Thyroid gland (tissue), 4 donors: ENCODE measurements at regions of chr1 and their contacts with region 1.

Region 1: DNA sequence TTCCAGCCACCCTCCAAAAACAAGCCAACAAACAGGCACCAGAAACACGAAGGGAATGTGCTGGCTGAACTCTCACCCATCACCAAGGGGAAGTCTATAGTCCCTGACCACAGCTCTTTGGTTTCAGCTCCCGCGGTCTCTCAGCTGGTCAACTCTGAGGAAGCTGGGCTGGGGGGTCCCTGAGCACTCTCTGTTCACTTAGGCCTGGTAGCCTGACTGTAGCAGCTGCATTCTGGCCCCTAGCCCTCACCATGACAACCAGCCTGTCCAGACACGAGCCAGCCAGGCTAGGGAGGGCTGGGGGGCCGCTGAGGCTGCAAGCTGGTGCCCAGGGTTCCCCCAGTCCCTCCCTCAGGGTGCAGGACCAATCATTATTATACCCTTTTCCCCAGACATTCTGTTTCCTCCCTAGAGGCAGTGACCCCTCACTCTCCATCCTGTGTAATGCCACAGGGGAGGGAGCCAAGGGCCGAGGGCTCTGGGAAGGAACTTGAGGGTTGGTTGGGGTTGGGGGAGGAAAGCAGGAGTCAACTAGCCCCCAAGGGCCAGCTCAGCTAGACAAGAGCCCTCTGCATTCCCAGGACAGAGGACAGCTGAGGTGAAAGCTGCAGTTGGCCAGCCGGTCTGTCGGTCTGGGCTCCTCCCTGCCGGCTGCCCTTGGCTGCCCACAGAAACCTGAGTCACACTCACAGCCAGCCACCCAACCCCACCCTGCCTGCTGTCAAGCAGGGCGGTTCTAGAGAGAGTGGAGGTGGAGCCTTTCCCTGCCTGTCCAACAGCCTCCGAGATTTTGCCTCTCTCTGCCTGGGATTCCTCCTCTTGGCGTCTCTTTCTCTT is 1.2 kb upstream of the TRAPPC3 start:
- DNase-seq: peak; percentile 98
- H3K4me3 ChIP-seq: no peak overlapping the region
- H3K27ac ChIP-seq: peak overlapping the region; percentile 94 to 100 (median 100)
- H3K4me1 ChIP-seq: peaks cover 44 to 51% of the 10 kb centered on the region in 2 donors
- H3K27me3 ChIP-seq: no peaks in the 10 kb centered on the region
- CTCF ChIP-seq: no peak
- POLR2A ChIP-seq: peak in 1 of 2 donors; percentile 96

Region 2: DNA sequence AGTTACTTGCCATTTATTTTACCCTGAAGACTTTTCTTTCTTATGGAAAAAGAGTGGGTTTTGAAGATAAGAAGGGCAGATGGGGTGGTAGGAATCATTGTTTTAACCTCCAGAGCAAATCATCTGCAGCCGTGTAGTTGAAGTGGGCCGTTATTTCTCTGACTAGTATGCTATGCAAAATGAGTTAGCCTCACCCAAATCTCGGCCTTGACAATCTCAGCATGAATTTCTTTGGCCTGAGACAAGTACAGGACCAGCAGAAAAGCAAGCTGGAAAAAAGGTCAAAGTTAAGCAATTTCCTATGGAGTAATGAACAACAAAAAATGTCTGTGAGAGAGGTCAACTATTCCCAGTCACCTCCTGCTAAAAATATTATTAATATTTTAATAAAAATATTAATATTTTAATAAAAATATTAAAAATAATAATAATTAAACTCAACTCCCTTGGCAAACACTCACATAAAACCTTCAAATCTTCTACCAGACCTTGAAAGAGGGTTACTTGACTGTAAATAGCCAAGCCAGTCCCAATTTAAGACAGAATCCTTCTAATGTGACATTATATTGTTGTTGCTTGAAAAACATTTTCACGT is 73.4 kb before region 1 on chr1:
- intact Hi-C with region 1: no loop called
- DNase-seq: no peak
- H3K4me3 ChIP-seq: no peak overlapping the region
- H3K27ac ChIP-seq: no peak overlapping the region
- H3K4me1 ChIP-seq: no peaks in the 10 kb centered on the region
- H3K27me3 ChIP-seq: no peaks in the 10 kb centered on the region
- CTCF ChIP-seq: no peak
- POLR2A ChIP-seq: no peak

Region 3: DNA sequence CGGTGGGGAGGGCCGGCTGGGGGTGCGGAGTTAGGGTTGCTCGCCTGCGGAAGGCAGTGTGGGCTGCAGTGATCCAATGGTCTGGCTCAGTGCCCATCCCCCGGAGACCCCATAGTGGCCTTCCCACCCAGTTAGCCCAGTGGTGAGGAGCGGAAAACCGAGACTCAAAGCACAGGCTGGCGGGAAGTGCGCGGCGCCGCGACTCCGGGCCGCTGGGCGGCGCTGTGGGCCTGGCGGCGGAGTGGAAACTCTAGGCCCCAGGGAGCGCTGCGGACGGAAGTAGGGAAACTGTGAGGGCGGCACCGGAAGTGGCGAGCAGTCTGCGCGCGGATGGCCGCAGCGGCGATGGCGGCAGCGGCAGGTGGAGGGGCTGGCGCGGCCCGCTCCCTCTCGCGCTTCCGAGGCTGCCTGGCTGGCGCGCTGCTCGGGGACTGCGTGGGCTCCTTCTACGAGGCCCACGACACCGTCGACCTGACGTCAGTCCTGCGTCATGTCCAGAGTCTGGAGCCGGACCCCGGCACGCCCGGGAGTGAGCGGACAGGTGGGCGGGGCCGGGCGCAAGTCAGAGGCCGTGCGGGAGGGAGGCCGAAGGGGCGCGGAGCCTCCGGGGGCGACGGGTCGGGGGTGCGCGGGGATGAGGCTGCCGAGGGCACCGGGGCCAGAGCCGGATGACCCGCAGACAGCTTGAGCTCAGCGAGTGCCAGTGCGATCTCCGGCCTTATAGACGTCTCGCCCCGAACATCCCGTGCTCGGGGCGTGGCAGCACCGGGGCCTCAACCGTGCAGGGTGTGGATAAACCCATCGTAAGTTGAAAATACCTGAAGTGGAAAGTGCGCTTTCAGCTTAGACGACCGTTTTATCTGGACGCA is 61.7 kb before region 1 on chr1 and contains the start of gene ADPRS:
- intact Hi-C with region 1: no loop called
- DNase-seq: peak; percentile 85 to 86
- H3K4me3 ChIP-seq: peak within 1 kb of the TSS; percentile 51 to 90 (median 73)
- H3K27ac ChIP-seq: peak within 1 kb of the TSS; percentile 19 to 88 (median 84)
- H3K4me1 ChIP-seq: peaks cover 24 to 42% of the 10 kb centered on the region in 2 donors
- H3K27me3 ChIP-seq: no peaks in the 10 kb centered on the region
- CTCF ChIP-seq: peak; percentile 88 to 100 (median 99)
- POLR2A ChIP-seq: peak; percentile 79 to 91
- total RNA-seq, gene ADPRS: 31.8 to 50.1 (median 41.7) TPM

Region 4: DNA sequence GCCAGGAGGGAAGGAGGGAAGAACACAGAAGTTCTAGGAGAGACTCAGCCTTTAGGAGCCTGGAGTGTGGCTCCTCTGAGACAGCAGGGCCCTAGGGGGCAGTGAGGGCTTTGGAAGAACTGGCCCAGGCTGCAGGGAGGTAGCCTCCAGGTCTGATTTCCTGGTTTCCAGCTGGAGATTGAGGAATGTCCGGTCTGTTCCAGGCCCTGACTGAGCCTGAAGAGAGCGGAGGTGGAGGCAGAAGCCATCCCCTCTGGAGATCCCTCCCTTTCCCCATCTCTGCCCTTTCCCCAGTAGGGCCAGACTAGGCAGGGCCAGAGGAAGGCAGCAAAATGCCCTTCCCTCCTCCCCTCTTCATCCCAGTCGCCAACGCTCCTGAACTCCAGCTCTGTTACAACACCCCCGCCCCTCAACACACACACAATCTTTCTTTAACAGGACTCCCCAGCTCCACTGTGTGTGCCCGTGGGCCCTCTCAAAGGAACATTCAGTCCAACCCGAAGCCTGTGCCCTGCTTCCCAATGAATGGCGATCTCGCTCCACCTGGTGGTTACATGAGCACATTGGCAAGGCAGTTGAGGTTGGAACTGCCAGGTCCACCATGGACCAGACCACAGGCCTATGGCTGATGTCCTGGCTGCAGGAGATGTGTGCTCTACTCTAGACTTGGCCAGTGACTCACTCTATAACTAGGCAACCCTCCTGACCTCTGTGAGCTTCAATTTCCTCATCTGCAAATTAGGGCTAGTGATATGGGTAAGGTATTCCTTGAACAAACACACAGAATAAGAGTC is 37.5 kb after region 1 on chr1:
- intact Hi-C with region 1: loop called (anchors 5 kb)
- DNase-seq: peak; percentile 92 to 94
- H3K4me3 ChIP-seq: no peak overlapping the region
- H3K27ac ChIP-seq: peak overlapping the region; percentile 77 to 91 (median 83)
- H3K4me1 ChIP-seq: peaks cover 9 to 17% of the 10 kb centered on the region in 2 donors
- H3K27me3 ChIP-seq: no peaks in the 10 kb centered on the region
- CTCF ChIP-seq: peak in 5 of 6 experiments; percentile 58 to 99 (median 95)
- POLR2A ChIP-seq: no peak

Region 5: DNA sequence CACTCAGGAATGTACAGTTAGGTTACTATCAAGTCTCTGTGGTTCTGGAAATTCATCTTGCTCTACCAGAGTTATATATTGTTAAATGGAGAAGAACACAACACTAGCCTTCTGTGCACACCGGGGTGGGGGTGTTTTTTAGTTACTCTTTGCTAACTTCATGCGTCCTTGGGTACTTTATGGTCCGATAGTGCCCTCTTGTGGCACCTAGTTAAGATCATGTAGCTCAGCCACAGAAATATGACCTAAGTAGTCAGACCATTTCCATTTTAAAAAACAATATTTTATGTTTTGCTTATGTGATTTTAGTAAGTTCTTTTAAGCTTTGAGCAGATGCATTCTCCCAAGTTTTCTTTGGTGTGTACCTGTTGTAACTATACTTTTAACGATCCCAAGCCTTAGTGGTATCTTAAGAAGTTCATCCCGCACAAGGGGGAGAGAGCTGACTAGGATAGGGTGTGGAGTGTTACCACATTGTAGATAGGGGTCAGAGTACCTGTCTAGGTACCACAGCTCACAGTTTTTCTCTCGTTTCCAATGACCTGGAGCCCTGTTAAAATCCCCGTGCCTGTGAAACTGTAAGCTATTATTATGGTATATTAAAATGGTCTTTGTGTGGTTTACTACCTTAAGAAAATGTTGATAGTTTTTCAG is 135.1 kb after region 1 on chr1:
- intact Hi-C with region 1: loop called (anchors 5 kb)
- DNase-seq: peak; percentile 69 to 72
- H3K4me3 ChIP-seq: no peak overlapping the region
- H3K27ac ChIP-seq: no peak overlapping the region
- H3K4me1 ChIP-seq: peaks cover 14 to 25% of the 10 kb centered on the region in 2 donors
- H3K27me3 ChIP-seq: no peaks in the 10 kb centered on the region
- CTCF ChIP-seq: peak; percentile 22 to 79 (median 74)
- POLR2A ChIP-seq: no peak